ENCODE measurements at regions of chr4 and their contacts with region 1.

Region 1: DNA sequence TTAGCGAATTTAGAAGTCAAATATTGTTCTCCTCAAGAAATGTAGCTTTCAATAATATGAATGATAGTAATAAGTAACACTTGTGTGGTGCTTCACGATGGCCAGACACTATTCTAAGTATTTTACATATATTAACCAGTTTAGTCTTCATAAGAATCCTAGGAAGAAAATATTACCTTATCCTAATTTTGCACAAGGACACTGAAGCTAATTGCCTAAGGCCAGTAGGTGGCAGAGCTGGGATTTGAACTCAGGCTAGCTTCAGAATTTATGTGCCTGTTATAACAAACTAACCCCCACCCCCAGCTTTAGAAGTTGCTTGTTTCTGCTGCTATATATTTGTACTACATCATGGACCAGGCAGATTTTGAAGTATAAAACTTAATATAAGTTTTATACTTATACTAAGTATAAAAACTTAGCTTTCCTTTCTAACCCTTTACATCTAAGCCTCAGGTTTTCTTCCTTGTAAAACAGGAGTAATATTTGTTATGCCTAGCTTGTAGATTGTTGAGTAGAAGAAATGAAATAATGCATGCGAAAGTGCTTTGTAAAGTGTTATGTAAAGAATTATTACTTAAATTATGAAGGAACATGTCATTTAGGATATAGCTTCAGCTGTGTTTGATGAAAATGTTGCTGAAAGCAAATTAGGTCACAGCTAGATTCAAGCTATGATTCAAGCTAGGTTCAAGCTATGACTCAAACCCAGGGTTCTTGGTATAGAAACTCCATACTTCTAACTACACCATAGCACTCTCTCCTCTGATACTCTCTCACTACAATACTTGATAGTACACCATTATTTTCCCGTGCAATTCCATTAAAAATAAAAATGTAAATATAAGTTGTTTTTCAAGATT is 4.2 kb upstream of the CDS1 start:
- H3K4me3 ChIP-seq: no peak overlapping the region
- H3K27ac ChIP-seq: no peak overlapping the region
- H3K4me1 ChIP-seq: no peaks in the 10 kb centered on the region
- CTCF ChIP-seq: no peak

Region 2: DNA sequence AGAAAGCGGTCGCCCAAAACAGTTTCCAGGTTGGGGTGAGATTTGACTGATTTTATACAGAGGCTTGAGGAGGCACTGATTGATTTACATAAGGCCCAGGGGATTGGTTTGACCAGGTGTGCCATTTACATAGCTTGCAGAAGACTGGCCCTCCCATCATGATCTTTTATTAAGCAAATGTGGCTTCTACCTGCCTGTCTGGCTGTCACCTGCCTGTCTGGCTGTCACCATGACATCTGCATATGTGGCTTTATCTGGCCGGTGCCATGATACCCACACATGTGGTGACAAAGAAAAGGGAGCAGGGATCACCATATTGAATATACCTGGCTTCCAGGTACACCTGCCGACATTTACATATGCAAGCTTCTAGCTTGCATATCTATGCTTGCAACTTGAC is 12.8 kb before region 1 on chr4:
- CTCF ChIA-PET with region 1: interaction called, 12 read pairs
- POLR2A ChIA-PET with region 1: no interaction called
- H3K4me3 ChIP-seq: no peak overlapping the region
- H3K27ac ChIP-seq: no peak overlapping the region
- H3K4me1 ChIP-seq: no peaks in the 10 kb centered on the region
- CTCF ChIP-seq: no peak